ENCODE measurements at regions of chr6 and their contacts with region 1.

Region 1: GRCh38 chr6:28090917-28091586 is 10.7 kb downstream of the ZNF165 start:
- DNase-seq: no peak
- H3K4me3 ChIP-seq: peak overlapping the region; percentile 36
- H3K27me3 ChIP-seq: no peaks in the 10 kb centered on the region
- CTCF ChIP-seq: no peak

Region 2: DNA sequence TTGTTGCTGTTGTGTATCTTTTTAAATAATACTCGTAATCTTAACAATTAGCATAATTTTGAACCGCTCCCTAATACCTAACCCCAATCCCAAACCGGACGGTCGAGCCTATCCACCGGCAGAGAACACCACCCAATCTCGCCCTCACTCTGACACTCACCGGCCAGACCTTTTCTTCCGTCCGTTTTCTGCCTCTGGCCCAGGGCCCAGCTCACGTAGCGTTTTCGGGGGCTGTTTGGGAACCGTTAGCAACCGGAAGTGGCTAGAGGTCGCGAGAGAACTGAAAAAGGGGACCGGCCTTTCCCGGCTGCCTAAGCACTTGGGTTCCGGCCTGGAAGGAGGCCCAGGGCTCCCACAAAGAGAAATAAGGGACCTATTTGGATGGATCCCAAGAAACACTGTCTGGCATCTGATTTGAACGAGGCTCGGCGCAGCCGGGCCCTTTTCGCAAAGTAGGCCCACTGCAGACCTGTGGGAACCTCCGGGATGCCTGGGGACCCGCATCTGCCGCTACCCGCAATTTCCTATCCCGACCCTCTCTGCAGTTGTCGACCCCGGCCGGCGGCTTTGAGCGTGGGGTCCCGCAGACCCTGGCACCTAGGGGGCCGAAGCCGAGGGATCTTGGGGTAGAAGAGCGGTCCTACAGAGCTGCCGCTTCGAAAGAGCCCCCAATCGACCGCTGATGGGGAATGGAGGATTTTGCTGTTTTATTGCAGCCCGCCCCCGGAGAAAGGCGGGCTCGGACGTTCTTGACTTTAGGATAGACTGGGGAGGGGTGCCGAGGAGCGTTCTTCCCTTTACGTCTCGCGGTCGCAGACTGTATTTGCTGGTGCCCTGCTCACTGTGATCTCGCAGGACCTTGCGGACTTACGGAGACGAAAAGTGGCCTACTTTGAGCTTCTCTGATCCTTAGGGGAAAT is 45.8 kb after region 1 on chr6:
- CTCF ChIA-PET with region 1: no interaction called
- POLR2A ChIA-PET with region 1: interaction called, 15 read pairs
- DNase-seq: no peak
- H3K4me3 ChIP-seq: peak overlapping the region; percentile 76
- H3K27me3 ChIP-seq: no peaks in the 10 kb centered on the region
- CTCF ChIP-seq: no peak

Region 3: DNA sequence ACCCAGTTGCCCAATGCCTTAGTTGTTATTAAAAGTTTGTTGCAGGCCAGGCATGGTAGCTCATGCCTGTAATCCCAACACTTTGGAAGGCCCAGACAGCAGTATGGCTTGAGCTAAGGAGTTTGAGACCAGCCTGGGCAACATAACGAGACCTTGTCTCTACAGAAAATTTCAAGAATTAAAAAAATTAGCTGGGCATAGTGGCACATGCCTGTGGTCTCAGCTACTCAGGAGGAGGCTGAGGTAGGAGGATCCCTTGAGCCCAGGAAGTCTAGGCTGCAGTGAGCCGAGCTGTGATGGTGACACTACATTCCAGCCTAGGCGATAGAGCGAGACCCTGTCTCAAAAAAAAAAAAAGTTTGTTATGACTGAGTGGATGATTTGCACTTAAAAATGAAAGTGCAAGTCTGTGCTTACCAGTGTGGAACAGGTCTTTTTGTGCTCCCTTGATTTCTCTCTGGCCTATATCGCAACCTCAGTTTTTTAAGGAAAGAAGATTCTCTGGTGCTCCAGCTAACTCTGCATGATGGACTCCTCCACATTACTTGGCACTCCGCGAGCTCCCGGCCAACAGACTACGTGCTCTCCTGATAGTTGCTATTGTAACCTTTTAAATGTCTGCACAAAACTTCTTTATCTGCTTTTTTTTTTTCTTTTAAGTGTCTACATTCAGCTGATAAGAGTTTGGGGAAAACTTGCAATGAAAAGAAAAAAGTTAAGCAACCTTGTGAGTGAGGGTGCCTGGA is 280.8 kb after region 1 on chr6:
- CTCF ChIA-PET with region 1: no interaction called
- POLR2A ChIA-PET with region 1: no interaction called
- DNase-seq: no peak
- H3K4me3 ChIP-seq: no peak overlapping the region
- H3K27me3 ChIP-seq: no peaks in the 10 kb centered on the region
- CTCF ChIP-seq: no peak

Measured in BJ (cell line).